ENCODE measurements at regions of chr16 and their contacts with region 1.

Region 1: GRCh38 chr16:27549859-27550581 is at the starts of genes GTF3C1 and KATNIP:
- DNase-seq: peak; percentile 92
- ATAC-seq: peak; percentile 99
- H3K4me3 ChIP-seq: peak within 1 kb of the TSS; percentile 90 to 100
- H3K27ac ChIP-seq: peak within 1 kb of the TSS; percentile 87
- H3K4me1 ChIP-seq: peaks cover 17% of the 10 kb centered on the region
- H3K27me3 ChIP-seq: no peaks in the 10 kb centered on the region
- CTCF ChIP-seq: no peak
- total RNA-seq, gene GTF3C1: 121 TPM
- total RNA-seq, gene KATNIP: 36.7 TPM

Region 2: GRCh38 chr16:27470567-27471431 is 79.2 kb before region 1 on chr16:
- CTCF ChIA-PET with region 1: no interaction called
- POLR2A ChIA-PET with region 1: no interaction called
- in situ Hi-C with region 1: no loop called
- intact Hi-C with region 1: no loop called
- DNase-seq: no peak
- ATAC-seq: no peak
- H3K4me3 ChIP-seq: no peak overlapping the region
- H3K27ac ChIP-seq: no peak overlapping the region
- H3K4me1 ChIP-seq: no peaks in the 10 kb centered on the region
- H3K27me3 ChIP-seq: no peaks in the 10 kb centered on the region
- CTCF ChIP-seq: no peak

Region 3: DNA sequence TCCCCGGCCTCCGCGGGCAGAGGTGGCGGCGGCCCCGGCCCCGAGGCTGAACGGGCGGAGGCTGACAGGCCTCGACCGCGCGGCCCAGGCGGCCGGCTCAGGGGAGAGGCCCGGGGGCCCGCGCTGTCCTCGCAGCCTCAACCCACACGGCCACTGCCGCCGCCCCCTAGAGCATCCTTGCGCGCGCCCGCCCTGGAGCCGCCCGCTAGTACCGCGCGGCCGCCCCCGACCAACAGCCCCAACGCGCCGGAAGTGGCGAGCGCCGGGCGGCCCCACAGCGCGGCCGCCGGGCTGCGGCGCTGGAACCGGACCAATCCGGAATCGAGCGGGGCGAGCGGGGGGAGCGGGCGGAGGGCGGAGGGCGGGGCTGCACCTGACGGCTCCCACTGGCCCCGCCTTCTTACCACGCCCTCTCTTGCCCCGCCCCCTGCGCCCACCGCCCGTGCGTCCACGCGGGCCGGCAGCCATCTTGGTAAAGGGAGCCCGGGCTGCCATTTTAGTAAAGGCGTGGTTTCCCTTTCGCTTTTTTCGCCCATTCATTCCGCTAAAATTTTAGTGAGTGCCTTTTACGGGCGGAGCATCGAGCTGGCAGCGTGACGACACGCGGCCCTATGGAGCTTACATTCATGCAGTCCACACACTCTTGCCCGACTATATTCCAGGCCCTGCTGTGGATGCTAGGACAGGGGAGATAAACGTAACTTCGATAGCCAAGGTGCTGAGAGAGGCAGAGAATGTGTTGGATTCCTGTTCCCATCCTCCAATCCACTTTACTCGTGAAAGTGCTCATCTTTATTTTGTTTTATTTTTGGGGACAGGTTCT is 661.9 kb after region 1 on chr16 and contains the start of gene XPO6:
- CTCF ChIA-PET with region 1: no interaction called
- POLR2A ChIA-PET with region 1: interaction called, 16 read pairs
- in situ Hi-C with region 1: no loop called
- intact Hi-C with region 1: no loop called
- DNase-seq: peak; percentile 61
- ATAC-seq: peak; percentile 92
- H3K4me3 ChIP-seq: peak within 1 kb of the TSS; percentile 74 to 85
- H3K27ac ChIP-seq: peak within 1 kb of the TSS; percentile 86
- H3K4me1 ChIP-seq: peaks cover 10% of the 10 kb centered on the region; the same call in 1 of the 2 replicates
- H3K27me3 ChIP-seq: no peaks in the 10 kb centered on the region
- CTCF ChIP-seq: no peak
- total RNA-seq, gene XPO6: 135 TPM